ENCODE measurements at regions of chr17 and their contacts with region 1.

Region 1: DNA sequence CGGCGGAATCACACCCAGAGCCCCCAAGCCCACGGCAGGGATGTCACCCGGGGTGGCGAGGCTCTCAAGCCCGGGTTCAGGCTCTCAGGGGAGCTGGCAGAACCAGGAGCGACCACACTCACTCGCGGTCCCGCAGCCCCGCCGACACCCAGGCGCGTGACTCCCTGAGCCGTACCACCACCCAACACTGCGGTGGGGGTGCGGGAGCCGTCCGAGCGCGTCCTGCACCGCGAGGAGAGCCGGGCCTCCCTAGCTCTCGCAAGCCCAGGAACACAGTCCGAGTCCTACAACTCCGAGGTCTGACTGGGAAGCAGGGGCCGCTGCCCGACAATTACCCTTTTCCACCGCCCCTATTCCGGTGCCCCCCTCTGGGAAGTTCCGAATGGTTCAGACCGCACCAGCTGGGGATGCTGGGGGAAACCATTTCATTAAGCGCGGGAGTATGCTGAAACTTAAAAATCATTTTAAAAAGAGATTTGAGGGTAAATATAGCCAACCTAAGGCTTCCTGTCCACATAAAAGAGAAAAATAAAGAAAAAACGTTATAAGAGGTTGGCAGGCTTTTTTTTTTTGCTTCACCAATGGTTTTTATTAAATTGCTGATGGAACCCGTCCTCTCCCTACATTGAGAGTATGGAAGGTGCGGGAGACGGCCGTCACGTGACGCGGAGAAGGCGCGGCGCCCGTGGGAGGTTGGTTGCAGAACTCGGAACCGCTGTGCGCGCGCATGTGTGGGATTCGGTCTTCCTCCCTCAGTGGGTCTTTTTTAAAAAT is at the start of gene FLCN:
- DNase-seq: peak; percentile 86 to 96 (median 91)
- ATAC-seq: peak; percentile 95
- H3K4me3 ChIP-seq: peak within 1 kb of the TSS; percentile 92
- H3K4me3 Mint-ChIP-seq: peak within 1 kb of the TSS; percentile 90 to 99 (median 96)
- H3K27ac ChIP-seq: peak within 1 kb of the TSS; percentile 97
- H3K27ac Mint-ChIP-seq: peak within 1 kb of the TSS; percentile 97 to 100 (median 98)
- H3K4me1 ChIP-seq: peaks cover 13 to 18% of the 10 kb centered on the region in 2 donors
- H3K4me1 Mint-ChIP-seq: peaks cover 16 to 38% (median 31%) of the 10 kb centered on the region in 7 donors
- H3K27me3 ChIP-seq: no peaks in the 10 kb centered on the region
- H3K27me3 Mint-ChIP-seq: peaks cover 0 to 6% (median 0%) of the 10 kb centered on the region in 5 donors
- total RNA-seq, gene FLCN: 39.4 to 94.7 (median 66.9) TPM

Region 2: GRCh38 chr17:17001874-17002520 is 235.2 kb before region 1 on chr17:
- CTCF ChIA-PET with region 1: no interaction called
- POLR2A ChIA-PET with region 1: no interaction called
- intact Hi-C with region 1: loop called in 1 of 2 experiments (anchors 5 kb)
- DNase-seq: peak; percentile 46 to 81 (median 74)
- ATAC-seq: peak; percentile 85
- H3K4me3 ChIP-seq: no peak overlapping the region
- H3K4me3 Mint-ChIP-seq: no peak overlapping the region
- H3K27ac ChIP-seq: no peak overlapping the region
- H3K27ac Mint-ChIP-seq: no peak overlapping the region
- H3K4me1 ChIP-seq: peaks cover 3 to 4% of the 10 kb centered on the region in 2 donors
- H3K4me1 Mint-ChIP-seq: peaks cover 0 to 5% (median 0%) of the 10 kb centered on the region in 7 donors
- H3K27me3 ChIP-seq: no peaks in the 10 kb centered on the region
- H3K27me3 Mint-ChIP-seq: peaks cover 0 to 7% (median 0%) of the 10 kb centered on the region in 5 donors

Region 3: GRCh38 chr17:17109896-17110295 is 127.3 kb before region 1 on chr17:
- CTCF ChIA-PET with region 1: no interaction called
- POLR2A ChIA-PET with region 1: no interaction called
- intact Hi-C with region 1: no loop called
- DNase-seq: peak in 1 of 9 donors; percentile 12
- ATAC-seq: peak; percentile 81
- H3K4me3 ChIP-seq: no peak overlapping the region
- H3K4me3 Mint-ChIP-seq: peak overlapping the region; percentile 45 to 78 (median 66)
- H3K27ac ChIP-seq: peak overlapping the region; percentile 20
- H3K27ac Mint-ChIP-seq: peak overlapping the region; percentile 39 to 94 (median 77)
- H3K4me1 ChIP-seq: peaks cover 34 to 36% of the 10 kb centered on the region in 2 donors
- H3K4me1 Mint-ChIP-seq: peaks cover 52 to 88% (median 77%) of the 10 kb centered on the region in 7 donors
- H3K27me3 ChIP-seq: no peaks in the 10 kb centered on the region
- H3K27me3 Mint-ChIP-seq: no peaks in the 10 kb centered on the region

Region 4: DNA sequence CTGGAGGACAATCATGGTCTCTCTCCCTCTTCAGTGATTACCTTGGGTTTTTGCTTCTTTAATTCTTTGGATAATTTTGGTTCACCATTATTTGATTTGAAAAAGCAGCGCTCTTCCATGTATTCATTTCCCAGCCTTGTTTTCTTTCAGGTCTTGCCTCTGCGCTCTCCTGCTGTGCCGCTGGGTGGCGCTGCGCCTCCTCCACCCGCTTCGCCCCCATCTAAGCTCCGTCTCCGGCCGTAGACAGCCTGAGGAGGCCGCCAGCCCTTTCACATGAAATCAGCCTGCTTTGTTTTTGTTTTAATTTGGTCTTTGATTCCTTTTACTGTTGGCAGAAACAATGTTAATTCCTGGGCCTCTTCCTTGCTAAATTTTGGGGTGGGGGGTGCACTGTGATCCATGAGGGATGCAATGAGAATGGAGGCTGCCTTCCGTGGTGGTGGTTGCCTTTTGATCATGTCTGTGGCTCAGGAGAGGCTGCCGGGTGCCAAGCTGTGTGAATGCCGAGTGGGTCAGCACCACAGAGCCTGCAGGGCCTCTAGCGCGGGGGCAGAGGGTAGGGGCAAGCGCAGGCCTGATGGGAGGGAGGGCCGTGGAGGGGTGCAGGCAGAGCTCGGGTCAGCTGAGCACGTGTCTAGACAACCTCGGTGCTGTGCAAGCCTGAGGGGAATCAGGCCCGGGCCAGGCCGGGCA is 95.2 kb before region 1 on chr17:
- CTCF ChIA-PET with region 1: no interaction called
- POLR2A ChIA-PET with region 1: no interaction called
- intact Hi-C with region 1: loop called (anchors 1 to 2 kb)
- DNase-seq: peak; percentile 35 to 64 (median 54)
- ATAC-seq: peak; percentile 74
- H3K4me3 ChIP-seq: no peak overlapping the region
- H3K4me3 Mint-ChIP-seq: peak overlapping the region in 2 of 10 donors; percentile 2 to 3
- H3K27ac ChIP-seq: no peak overlapping the region
- H3K27ac Mint-ChIP-seq: peak overlapping the region in 7 of 9 donors; percentile 5 to 85 (median 63)
- H3K4me1 ChIP-seq: peaks cover 0 to 2% of the 10 kb centered on the region in 2 donors
- H3K4me1 Mint-ChIP-seq: peaks cover 8 to 24% (median 9%) of the 10 kb centered on the region in 7 donors
- H3K27me3 ChIP-seq: no peaks in the 10 kb centered on the region
- H3K27me3 Mint-ChIP-seq: no peaks in the 10 kb centered on the region

Region 5: GRCh38 chr17:17151962-17152361 is 85.3 kb before region 1 on chr17:
- CTCF ChIA-PET with region 1: no interaction called
- POLR2A ChIA-PET with region 1: no interaction called
- intact Hi-C with region 1: loop called in 1 of 2 experiments (anchors 1 kb)
- DNase-seq: no peak
- ATAC-seq: peak; percentile 66
- H3K4me3 ChIP-seq: no peak overlapping the region
- H3K4me3 Mint-ChIP-seq: peak overlapping the region in 3 of 10 donors; percentile 15 to 52 (median 27)
- H3K27ac ChIP-seq: no peak overlapping the region
- H3K27ac Mint-ChIP-seq: peak overlapping the region in 3 of 9 donors; percentile 28 to 78 (median 77)
- H3K4me1 ChIP-seq: peaks cover 13 to 40% of the 10 kb centered on the region in 2 donors
- H3K4me1 Mint-ChIP-seq: peaks cover 32 to 49% (median 41%) of the 10 kb centered on the region in 7 donors
- H3K27me3 ChIP-seq: no peaks in the 10 kb centered on the region
- H3K27me3 Mint-ChIP-seq: no peaks in the 10 kb centered on the region

Region 6: DNA sequence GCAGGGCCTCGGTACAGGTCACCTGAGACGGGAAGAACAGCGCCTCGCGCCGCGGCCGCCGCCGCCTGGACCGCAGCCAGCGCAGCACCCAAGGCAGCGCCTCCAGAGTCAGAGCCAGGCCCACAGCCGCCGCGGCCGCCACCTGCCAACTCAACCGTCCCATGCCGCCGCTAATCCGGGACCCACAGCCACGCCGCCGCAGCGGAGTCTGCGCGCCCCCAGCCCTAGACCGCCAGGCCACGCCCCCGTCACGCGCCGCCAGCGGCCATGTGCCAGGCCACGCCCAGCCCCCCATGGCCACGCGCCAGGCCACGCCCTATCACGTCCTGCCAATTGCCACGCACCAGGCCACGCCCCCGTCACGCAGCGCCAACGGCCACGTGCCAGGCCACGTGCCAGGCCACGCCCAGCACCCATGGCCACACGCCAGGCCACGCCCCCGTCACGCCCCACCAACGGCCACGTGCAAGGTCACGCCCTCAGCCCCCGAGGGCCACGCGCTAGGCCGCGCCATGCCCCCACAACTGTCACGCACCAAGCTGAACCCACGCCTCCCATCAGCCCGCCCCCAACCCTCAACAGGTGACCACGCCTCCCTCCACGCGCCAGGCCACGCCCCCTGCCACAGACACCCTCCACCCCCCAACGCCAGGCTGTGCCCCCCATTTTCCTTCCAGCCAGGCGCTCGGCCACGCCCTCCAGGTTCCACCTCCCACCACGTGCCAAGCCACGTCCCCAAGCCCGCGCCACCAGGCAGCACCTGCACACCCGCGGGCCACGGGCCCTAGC is 30.9 kb before region 1 on chr17 and contains the start of gene PLD6:
- CTCF ChIA-PET with region 1: interaction called, 4 read pairs
- POLR2A ChIA-PET with region 1: interaction called, 10 read pairs
- intact Hi-C with region 1: loop called (anchors 1 kb)
- DNase-seq: peak; percentile 88 to 96 (median 93)
- ATAC-seq: peak; percentile 92
- H3K4me3 ChIP-seq: peak within 1 kb of the TSS; percentile 68
- H3K4me3 Mint-ChIP-seq: peak within 1 kb of the TSS; percentile 87 to 93 (median 89)
- H3K27ac ChIP-seq: peak within 1 kb of the TSS; percentile 70
- H3K27ac Mint-ChIP-seq: peak within 1 kb of the TSS; percentile 75 to 96 (median 91)
- H3K4me1 ChIP-seq: peaks cover 17 to 30% of the 10 kb centered on the region in 2 donors
- H3K4me1 Mint-ChIP-seq: peaks cover 12 to 32% (median 19%) of the 10 kb centered on the region in 7 donors
- H3K27me3 ChIP-seq: no peaks in the 10 kb centered on the region
- H3K27me3 Mint-ChIP-seq: no peaks in the 10 kb centered on the region
- total RNA-seq, gene PLD6: 6.2 to 13.9 (median 12.1) TPM

Region 7: DNA sequence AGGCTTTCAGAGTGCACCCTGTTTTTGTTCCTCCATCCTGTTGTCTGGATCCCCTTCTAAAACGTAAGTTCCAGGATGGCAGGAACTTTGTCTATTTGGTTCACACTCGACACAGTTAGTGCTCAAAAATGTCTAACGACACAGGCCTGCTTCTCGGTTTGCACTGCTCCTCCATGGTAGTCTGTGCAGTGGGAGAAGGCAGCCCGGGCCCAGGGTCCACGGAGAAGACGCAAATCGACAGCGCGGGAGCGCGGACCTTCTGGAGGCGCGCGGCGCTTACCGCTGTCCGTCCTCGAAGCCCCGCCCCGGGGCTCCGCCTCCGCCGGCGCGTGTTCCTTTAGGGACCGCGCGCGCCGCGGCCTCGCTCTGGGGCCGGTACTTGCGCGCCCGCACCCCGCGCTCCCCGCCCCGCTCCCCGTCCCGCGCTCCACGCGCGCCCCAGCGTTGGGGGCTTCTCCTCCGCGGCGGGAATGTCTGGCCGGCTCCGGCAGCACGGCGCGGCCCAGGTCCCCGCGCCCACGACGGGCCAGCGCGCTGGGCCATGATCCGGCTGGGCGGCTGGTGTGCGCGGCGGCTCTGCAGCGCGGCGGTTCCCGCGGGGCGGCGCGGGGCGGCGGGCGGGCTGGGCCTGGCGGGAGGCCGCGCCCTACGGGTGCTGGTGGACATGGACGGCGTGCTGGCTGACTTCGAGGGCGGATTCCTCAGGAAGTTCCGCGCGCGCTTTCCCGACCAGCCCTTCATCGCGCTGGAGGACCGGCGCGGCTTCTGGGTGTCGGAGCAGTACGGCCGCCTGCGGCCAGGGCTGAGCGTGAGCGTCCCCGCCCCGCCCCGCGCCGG is 66.0 kb after region 1 on chr17 and contains the start of gene NT5M:
- CTCF ChIA-PET with region 1: no interaction called
- POLR2A ChIA-PET with region 1: interaction called, 5 read pairs
- intact Hi-C with region 1: loop called (anchors 1 kb)
- DNase-seq: peak; percentile 33 to 84 (median 56)
- ATAC-seq: peak; percentile 77
- H3K4me3 ChIP-seq: peak within 1 kb of the TSS; percentile 58
- H3K4me3 Mint-ChIP-seq: peak within 1 kb of the TSS; percentile 82 to 96 (median 90)
- H3K27ac ChIP-seq: peak within 1 kb of the TSS; percentile 67
- H3K27ac Mint-ChIP-seq: peak within 1 kb of the TSS; percentile 53 to 93 (median 84)
- H3K4me1 ChIP-seq: peaks cover 12 to 33% of the 10 kb centered on the region in 2 donors
- H3K4me1 Mint-ChIP-seq: peaks cover 16 to 49% (median 37%) of the 10 kb centered on the region in 7 donors
- H3K27me3 ChIP-seq: no peaks in the 10 kb centered on the region
- H3K27me3 Mint-ChIP-seq: no peaks in the 10 kb centered on the region
- total RNA-seq, gene NT5M: 2.9 to 6.3 (median 3.5) TPM

Region 8: GRCh38 chr17:17739388-17740066 is 502.3 kb after region 1 on chr17:
- CTCF ChIA-PET with region 1: no interaction called
- POLR2A ChIA-PET with region 1: no interaction called
- intact Hi-C with region 1: no loop called
- DNase-seq: no peak
- ATAC-seq: no peak
- H3K4me3 ChIP-seq: no peak overlapping the region
- H3K4me3 Mint-ChIP-seq: peak overlapping the region in 5 of 10 donors; percentile 2 to 55 (median 45)
- H3K27ac ChIP-seq: peak overlapping the region; percentile 43
- H3K27ac Mint-ChIP-seq: peak overlapping the region in 8 of 9 donors; percentile 26 to 86 (median 70)
- H3K4me1 ChIP-seq: peaks cover 0 to 12% of the 10 kb centered on the region in 2 donors
- H3K4me1 Mint-ChIP-seq: peaks cover 20 to 46% (median 36%) of the 10 kb centered on the region in 7 donors
- H3K27me3 ChIP-seq: no peaks in the 10 kb centered on the region
- H3K27me3 Mint-ChIP-seq: peaks cover 0 to 5% (median 0%) of the 10 kb centered on the region in 5 donors

Measured in naive thymus-derived CD4-positive, alpha-beta T cell (primary cell).